ENCODE measurements at regions of chr7 and their contacts with region 1.

Region 1: DNA sequence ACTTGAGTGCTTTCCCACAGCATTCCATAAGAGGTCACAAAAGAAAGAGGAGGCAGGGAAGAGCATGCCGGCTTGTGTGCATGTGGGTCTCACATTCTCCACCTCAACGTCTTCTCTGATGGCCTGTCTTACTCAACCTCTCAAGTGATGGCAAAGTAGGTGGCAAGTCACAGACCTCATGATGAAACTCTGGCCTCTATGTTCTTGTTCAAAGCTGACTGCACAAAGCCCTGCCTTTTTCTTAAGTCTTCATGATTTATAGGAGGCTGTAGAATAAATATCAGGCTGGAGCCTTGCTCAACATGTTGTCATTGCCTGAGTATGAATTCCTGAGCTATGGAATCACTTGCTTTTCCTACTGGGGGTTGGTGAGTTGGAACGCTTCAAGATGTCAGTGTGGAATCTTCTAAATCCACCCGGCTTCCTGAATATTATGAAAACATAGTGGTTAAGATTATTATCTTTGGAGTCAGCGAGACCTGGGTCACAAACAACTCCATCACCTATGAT is 213.6 kb upstream of the INHBA start:
- DNase-seq: no peak
- ATAC-seq: peak; percentile 90
- H3K4me3 ChIP-seq: no peak overlapping the region
- H3K27ac ChIP-seq: peak overlapping the region in 1 of 2 donors; percentile 90
- H3K4me1 ChIP-seq: peaks cover 3 to 6% of the 10 kb centered on the region in 2 donors
- H3K27me3 ChIP-seq: no peaks in the 10 kb centered on the region

Region 2: DNA sequence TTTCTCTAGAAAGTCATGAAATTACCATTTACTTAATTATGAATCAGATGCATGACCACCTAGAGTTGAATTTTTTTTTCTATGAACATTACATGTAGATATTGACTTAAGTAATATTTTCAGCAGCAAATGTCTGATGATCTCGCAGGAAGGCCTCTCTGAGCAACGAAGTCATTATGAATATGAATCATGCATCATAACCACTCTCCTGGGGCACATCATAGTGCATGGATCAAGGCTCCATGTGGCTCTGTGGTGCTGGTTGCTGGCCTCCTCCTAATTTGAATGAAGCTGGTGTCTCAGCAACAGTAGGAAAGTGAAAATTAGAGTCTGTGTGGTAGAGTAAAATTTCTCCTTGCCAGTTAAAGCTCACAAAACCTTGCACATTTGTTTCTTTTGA is 92.2 kb before region 1 on chr7:
- intact Hi-C with region 1: loop called (anchors 10 kb)
- DNase-seq: no peak
- ATAC-seq: no peak
- H3K4me3 ChIP-seq: no peak overlapping the region
- H3K27ac ChIP-seq: no peak overlapping the region
- H3K4me1 ChIP-seq: peaks cover 0 to 11% of the 10 kb centered on the region in 2 donors
- H3K27me3 ChIP-seq: no peaks in the 10 kb centered on the region